Endothelial cell of umbilical vein (primary cell): ENCODE measurements at regions of chr1 and their contacts with region 1.

Region 1: GRCh38 chr1:115642168-115643072 is 650 bp downstream of the VANGL1 start:
- DNase-seq: peak; percentile 46
- H3K4me3 ChIP-seq: peak overlapping the region; percentile 54 to 86 (median 71)
- H3K27ac ChIP-seq: peak overlapping the region; percentile 37
- H3K4me1 ChIP-seq: peaks cover 16% of the 10 kb centered on the region
- H3K27me3 ChIP-seq: peaks cover 0 to 6% of the 10 kb centered on the region in 2 experiments
- CTCF ChIP-seq: no peak
- POLR2A ChIP-seq: no peak

Region 2: DNA sequence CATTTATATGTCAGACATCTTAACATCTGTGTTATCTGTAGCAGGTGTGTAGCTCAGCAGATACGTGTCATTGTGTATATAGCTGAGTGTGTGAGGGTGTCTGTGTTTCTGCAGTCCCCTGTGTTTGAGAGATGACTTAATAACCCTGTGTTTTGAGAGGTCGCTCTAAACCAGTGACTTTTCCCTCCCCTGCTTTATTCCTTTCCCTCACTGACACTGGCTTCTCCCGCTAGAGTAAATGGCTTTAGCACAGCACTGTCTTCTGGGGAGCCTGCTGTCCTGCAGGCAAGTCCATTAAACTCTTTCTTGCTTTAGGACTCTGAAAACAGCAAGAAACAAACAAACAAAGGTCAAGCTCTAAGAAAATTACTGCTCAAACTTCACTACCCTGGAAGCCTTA is 52.4 kb after region 1 on chr1:
- CTCF ChIA-PET with region 1: no interaction called
- POLR2A ChIA-PET with region 1: no interaction called
- dilution Hi-C with region 1: no loop called
- intact Hi-C with region 1: loop called (anchors 5 kb)
- DNase-seq: no peak
- H3K4me3 ChIP-seq: no peak overlapping the region
- H3K27ac ChIP-seq: no peak overlapping the region
- H3K4me1 ChIP-seq: no peaks in the 10 kb centered on the region
- H3K27me3 ChIP-seq: peaks cover 0 to 3% of the 10 kb centered on the region in 2 experiments
- CTCF ChIP-seq: no peak
- POLR2A ChIP-seq: no peak